Ascending aorta (tissue), 2 donors: ENCODE measurements at regions of chr1 and their contacts with region 1.

Region 1: GRCh38 chr1:202888531-202889360 is at the start of gene RABIF:
- DNase-seq: peak; percentile 84 to 97
- H3K4me3 ChIP-seq: peak within 1 kb of the TSS; percentile 75 to 79
- H3K27ac ChIP-seq: peak within 1 kb of the TSS; percentile 78 to 94
- H3K4me1 ChIP-seq: peaks cover 0 to 13% of the 10 kb centered on the region in 2 donors
- H3K27me3 ChIP-seq: no peaks in the 10 kb centered on the region
- CTCF ChIP-seq: peak in 1 of 3 experiments; percentile 20
- total RNA-seq, gene RABIF: 1.9 TPM

Region 2: DNA sequence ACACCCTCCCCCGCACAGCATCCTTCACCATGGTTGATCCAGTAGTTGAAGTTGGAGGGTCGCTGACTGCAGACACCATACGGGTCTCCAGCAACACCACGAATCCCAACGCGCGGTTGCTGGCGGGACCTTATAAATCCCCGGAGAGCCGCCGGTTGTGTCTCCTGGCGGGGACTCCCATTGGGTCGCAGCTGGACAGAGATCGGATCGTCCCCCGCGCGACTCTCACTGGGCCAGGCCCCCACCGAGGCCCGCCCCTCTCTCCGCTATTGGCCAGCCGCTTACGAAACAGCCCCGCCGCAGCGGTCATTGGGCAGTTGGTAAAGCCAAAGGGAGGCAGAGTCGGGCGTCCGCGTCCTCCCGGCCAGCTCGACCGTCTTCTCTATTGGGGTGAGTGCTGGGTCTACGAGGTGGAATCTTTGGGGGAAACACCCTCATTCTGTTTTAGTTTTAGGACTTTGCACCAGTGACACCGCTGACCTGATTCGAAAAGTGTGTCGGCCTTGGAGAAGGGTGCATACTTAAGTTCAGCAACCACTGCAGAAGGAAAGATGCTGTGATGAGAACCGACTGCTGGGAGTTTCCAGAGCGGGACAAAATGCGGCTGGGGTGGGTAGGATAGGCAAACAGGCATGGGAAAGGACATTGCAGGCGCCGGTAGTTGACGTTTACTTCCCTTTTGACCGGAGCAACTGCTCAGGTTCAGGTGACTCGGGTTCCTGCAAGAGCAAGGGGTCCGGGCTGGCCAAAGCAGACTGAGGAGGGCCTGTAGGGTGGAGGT is 27.1 kb before region 1 on chr1:
- intact Hi-C with region 1: loop called (anchors 1 kb)
- DNase-seq: peak; percentile 72 to 95
- H3K4me3 ChIP-seq: peak overlapping the region; percentile 72 to 89
- H3K27ac ChIP-seq: no peak overlapping the region
- H3K4me1 ChIP-seq: peaks cover 3 to 5% of the 10 kb centered on the region in 2 donors
- H3K27me3 ChIP-seq: no peaks in the 10 kb centered on the region
- CTCF ChIP-seq: no peak

Region 3: DNA sequence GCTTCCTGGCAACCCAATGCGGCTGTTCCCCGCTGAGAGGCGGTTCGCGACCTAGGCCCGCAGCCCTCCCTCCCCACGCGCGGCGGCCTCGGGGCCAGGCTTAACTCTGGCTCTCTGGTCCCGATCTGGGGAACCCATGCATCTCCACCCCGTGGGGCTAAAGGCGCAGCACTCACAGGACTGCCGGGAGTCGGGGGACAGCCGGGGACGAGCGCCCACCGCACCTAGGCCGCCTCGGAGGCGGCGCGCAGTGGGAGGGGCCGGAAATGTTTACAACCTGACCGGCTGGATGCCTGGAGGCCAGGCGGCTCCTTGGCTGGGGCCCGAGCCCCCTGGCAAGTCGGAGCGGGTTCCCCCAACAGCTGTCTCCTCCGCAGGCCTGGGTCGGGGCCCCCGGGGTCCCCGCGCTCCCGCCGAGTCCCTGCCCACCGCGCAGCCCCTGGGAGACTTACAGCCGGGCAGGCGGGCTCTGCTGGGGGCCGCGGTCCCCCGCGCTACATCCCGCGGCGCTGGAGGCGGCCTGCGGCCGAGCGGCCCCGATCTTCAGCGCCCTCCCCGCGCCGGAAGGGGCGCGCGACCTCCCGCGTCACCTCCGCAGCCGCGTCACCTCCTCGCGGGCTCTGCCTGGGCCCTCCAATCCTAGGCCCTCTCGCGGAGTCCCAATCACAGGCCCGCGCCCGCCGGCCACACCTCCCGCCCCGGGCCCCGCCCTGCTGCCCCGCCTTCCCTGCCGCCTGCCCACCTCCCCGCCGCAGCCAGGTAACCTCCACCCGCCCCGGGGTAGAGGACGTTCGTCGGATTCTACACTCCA is 69.2 kb after region 1 on chr1 and contains the start of gene ADIPOR1:
- intact Hi-C with region 1: loop called (anchors 2 kb)
- DNase-seq: peak; percentile 59 to 94
- H3K4me3 ChIP-seq: peak within 1 kb of the TSS; percentile 80 to 94
- H3K27ac ChIP-seq: peak within 1 kb of the TSS; percentile 95 to 96
- H3K4me1 ChIP-seq: peaks cover 3 to 21% of the 10 kb centered on the region in 2 donors
- H3K27me3 ChIP-seq: no peaks in the 10 kb centered on the region
- CTCF ChIP-seq: peak in 2 of 3 experiments; percentile 17 to 29
- total RNA-seq, gene ADIPOR1: 67.9 TPM

Region 4: DNA sequence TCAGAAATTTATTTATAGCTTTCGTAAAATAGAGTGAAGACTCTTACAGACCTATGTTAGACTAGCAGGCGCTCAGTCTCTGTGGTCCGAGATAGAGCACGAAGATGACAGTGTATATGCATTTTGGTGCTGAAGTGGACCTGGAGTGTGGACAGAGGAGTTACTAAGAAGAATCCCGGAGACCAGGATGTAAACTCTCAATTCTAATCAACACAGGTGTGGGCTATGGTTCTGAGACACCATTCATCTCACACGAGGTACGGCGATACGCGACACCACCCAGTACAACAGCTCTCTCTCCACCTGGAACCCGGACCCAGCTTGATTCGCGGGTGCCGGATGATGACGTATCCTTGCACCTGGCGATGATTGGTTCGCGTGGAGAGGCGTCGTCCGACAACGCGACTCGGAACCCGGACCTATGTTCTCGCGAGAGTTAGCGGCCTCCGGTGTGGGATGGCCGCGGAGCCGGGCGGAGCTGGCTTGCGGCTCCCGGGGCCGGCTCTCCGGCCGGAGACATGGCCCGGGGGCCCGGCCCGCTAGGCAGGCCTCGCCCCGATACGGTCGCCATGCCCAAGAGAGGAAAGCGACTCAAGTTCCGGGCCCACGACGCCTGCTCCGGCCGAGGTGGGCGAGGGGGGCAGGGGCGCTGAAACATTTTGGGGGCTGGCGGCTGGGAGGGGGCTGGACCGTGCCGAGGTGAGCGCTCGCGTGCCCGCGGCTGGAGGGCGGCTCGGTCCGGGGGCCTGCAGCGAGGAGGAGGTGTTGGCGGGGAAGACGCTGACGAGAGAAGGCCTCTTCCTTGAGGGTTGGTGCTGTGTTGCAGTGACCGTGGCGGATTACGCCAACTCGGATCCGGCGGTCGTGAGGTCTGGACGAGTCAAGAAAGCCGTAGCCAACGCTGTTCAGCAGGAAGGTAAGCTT is 118.5 kb after region 1 on chr1 and contains the start of gene TMEM183A:
- intact Hi-C with region 1: loop called (anchors 2 kb)
- DNase-seq: peak; percentile 83 to 97
- H3K4me3 ChIP-seq: peak within 1 kb of the TSS; percentile 78 to 89
- H3K27ac ChIP-seq: peak within 1 kb of the TSS; percentile 79 to 95
- H3K4me1 ChIP-seq: peaks cover 6 to 14% of the 10 kb centered on the region in 2 donors
- H3K27me3 ChIP-seq: no peaks in the 10 kb centered on the region
- CTCF ChIP-seq: no peak
- total RNA-seq, gene TMEM183A: 44.6 TPM